Activated T-helper 2 cell treated with anti-CD3 and anti-CD28 coated beads, Interferon-gamma antibody, Interleukin-2, Interleukin-4, amounts not matched to agents 10 μg/mL and 5 μg/mL and 100 μg/mL, durations not matched to agents 14 hours and 24 hours and 36 hours (primary cell): ENCODE measurements at regions of chr12 and their contacts with region 1.

Region 1: DNA sequence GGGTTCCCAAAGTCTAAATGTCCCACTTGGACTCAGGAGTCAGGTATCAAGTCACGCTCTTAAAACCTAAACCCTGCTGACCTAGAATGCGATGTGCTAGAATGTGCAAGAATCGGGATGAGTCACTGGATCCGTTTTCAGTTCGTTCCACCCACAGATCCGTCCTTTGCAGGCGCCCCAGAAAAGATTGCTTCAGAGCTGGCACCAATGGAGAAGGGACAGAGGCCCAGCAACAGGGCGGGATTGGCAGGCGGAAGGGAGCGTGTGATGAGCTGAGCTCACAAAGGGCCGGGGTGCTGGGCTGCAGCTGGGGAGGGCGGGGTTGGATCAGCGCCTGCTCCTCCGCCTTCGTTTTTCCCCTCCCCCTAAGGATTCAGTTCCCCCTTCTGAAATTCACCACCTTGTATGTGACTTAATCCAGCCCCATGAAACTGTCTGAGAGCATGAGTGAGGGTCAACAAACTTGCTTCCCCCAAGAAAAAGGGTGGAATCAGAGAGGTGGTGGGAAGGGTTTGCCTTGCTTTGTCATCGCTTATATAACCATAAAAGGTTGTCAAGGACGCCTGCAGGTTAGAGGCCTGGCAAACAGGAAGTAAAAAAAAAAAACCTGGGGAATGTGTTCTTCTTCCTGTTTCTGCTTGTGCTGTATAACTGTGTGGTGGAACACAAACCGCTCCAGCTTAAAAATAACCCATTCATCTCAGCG is 2.8 kb upstream of the UBC start:
- DNase-seq: peak; percentile 93
- H3K4me3 Mint-ChIP-seq: peak overlapping the region; percentile 86
- H3K27ac Mint-ChIP-seq: peak overlapping the region; percentile 98
- H3K4me1 Mint-ChIP-seq: peaks cover 69% of the 10 kb centered on the region
- H3K27me3 Mint-ChIP-seq: no peaks in the 10 kb centered on the region

Region 2: GRCh38 chr12:124466216-124467128 is 450.8 kb before region 1 on chr12:
- intact Hi-C with region 1: loop called (anchors 5 kb)
- DNase-seq: peak; percentile 83
- H3K4me3 Mint-ChIP-seq: peak overlapping the region; percentile 60
- H3K27ac Mint-ChIP-seq: peak overlapping the region; percentile 74
- H3K4me1 Mint-ChIP-seq: peaks cover 36% of the 10 kb centered on the region
- H3K27me3 Mint-ChIP-seq: no peaks in the 10 kb centered on the region

Region 3: DNA sequence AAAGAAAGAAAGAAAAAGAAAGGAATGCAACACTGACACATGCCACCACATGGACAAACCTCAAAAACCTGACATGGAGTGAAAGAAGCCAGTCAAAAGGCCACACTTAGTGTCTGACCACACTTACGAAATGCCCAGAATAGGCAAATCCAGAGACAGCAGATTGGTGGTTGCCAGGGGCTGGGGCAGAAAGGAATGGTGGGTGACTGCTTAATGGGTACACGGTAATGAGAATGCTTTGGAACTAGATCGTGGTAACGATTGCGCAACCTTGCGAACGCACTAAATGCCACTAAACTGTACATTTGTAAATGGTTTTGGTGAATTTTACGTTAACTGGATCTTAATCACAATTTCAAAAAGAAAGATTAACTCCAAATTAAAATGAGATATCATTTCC is 93.1 kb before region 1 on chr12:
- intact Hi-C with region 1: no loop called
- DNase-seq: no peak
- H3K4me3 Mint-ChIP-seq: no peak overlapping the region
- H3K27ac Mint-ChIP-seq: no peak overlapping the region
- H3K4me1 Mint-ChIP-seq: peaks cover 4% of the 10 kb centered on the region
- H3K27me3 Mint-ChIP-seq: no peaks in the 10 kb centered on the region

Region 4: GRCh38 chr12:124884587-124885438 is 32.5 kb before region 1 on chr12:
- intact Hi-C with region 1: no loop called
- DNase-seq: no peak
- H3K4me3 Mint-ChIP-seq: no peak overlapping the region
- H3K27ac Mint-ChIP-seq: no peak overlapping the region
- H3K4me1 Mint-ChIP-seq: peaks cover 3% of the 10 kb centered on the region
- H3K27me3 Mint-ChIP-seq: peaks cover 2% of the 10 kb centered on the region

Region 5: GRCh38 chr12:124927201-124928094 is 10.2 kb after region 1 on chr12:
- intact Hi-C with region 1: loop called (anchors 1 kb)
- DNase-seq: peak; percentile 90
- H3K4me3 Mint-ChIP-seq: peak overlapping the region; percentile 92
- H3K27ac Mint-ChIP-seq: peak overlapping the region; percentile 88
- H3K4me1 Mint-ChIP-seq: peaks cover 30% of the 10 kb centered on the region
- H3K27me3 Mint-ChIP-seq: peaks cover 3% of the 10 kb centered on the region

Region 6: DNA sequence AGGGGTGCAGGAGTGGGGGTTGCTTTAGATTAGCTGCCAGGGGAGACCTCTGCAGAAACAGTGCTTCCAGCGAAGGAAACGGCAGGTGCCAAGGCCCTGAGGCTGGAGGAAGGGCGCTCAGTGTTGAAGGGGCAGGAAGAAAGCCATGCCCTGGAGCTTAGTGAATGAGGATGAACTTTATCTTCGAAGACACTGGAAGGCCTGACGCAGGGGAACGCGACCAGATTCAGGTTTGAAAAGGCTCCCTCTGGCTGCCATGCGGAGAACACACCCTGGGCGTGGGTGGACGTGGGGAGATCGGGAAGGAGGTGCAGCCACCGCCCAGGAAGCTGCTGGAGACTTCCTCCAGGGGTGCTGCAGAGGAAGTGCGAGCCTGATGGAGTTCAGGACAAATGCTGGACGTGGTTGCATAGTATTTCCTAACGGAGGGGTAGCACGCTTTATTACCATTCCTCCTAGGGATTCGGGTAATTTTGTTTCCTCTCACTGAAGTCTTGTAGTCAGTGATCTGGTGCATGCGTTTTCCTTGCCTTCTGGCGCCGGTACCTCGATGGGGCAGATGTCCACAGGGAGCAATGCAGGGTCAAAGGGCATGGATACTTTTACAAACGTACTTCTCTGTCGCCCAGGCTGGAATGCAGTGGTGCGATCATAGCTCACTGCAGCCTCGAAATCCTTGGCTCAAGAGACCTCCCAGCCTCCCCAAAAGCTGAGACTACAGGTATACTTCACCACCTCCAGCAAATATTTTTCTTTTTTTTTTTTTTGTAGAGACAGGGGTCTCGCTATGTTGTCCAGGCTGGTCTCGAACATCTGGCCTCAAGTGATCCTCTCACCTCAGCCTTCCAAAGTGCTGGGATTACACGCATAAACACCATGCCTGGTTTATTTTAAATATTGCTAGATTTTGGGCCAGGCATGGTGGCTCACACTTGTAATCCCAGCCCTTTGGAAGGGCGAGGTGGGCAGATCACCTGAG is 23.6 kb after region 1 on chr12:
- intact Hi-C with region 1: loop called (anchors 1 kb)
- DNase-seq: peak; percentile 77
- H3K4me3 Mint-ChIP-seq: no peak overlapping the region
- H3K27ac Mint-ChIP-seq: no peak overlapping the region
- H3K4me1 Mint-ChIP-seq: peaks cover 13% of the 10 kb centered on the region
- H3K27me3 Mint-ChIP-seq: no peaks in the 10 kb centered on the region

Region 7: DNA sequence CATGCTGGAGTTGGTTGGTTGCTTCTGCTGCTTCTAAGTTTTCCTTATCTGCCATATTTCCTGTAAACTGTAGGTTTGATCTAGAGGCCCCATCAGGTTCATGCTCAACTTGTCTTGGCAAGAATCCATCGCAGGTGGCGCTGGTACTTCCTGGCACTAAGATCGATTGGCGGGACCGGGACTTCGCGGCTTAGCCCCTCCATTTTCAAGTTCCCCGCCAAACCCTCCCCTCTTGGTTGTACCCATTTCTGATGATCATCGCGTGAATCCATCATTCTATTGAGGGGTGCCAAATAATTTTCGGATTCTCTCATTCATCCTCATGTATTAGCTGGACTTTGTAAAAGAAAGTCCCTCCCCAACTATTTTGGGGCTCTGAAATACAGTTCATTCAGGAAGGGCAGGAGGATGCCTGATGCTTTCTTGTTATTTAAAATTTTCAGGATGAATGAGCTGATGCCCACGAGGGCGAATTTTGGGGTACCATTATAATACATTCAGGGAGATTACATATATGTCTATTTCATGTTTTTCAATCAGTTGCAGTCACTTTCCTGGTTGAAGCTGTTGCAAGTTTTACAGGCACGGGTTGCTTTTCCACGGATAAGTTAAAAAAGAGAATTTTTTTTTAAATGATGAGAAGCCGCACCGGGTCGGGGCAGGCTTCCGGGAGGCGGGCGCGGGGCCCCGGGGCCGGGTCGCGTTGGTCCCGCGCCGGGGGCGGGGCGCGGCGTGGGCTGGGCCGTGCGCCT is 75.8 kb after region 1 on chr12:
- intact Hi-C with region 1: loop called (anchors 2 kb)
- DNase-seq: peak; percentile 84
- H3K4me3 Mint-ChIP-seq: peak overlapping the region; percentile 88
- H3K27ac Mint-ChIP-seq: peak overlapping the region; percentile 93
- H3K4me1 Mint-ChIP-seq: peaks cover 30% of the 10 kb centered on the region
- H3K27me3 Mint-ChIP-seq: no peaks in the 10 kb centered on the region